Endothelial cell of umbilical vein (primary cell): ENCODE measurements at regions of chr11 and their contacts with region 1.

Region 1: DNA sequence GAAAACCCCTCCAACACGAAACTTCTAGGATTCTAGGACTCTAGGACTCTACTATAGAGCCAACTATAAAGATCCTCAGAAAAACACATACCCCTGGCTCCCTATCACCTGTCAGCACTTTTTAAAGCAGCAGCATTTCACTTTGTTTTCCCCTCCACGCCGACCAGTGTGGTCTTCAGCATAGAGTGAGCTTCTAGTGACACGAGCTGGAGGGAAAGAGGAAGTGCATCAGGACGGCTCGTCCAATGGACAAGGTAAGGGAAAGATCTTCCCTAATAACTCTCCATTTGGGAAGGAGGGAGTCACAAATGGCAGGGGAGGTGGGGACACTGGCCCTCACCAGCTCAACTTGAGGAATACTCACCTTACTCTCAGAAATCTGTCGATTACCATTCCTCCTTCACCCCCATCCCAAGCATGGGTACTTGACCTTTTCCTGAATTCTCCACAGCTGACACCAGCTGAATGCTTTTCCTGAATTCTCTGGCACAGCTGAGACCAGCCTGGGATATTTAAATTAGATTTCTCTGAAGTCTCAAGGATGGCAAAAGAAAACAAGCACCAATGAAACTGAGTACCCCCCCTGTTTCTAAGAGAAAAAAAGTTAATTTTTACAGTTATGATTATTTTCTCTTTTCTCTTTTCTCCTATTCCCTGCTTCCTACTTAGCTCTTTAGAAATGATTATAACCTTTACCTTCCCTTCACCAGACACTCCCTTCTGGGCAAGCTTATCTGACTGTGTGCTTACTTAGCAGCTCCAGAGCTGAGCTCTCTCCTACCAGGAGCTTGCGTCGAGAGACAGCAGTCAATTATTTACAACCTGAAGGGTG is 33.3 kb upstream of the NNMT start:
- DNase-seq: peak; percentile 55
- H3K4me3 ChIP-seq: no peak overlapping the region
- H3K27ac ChIP-seq: no peak overlapping the region
- H3K4me1 ChIP-seq: no peaks in the 10 kb centered on the region
- H3K27me3 ChIP-seq: peaks cover 9 to 14% of the 10 kb centered on the region in 2 experiments
- CTCF ChIP-seq: peak; percentile 72 to 73
- POLR2A ChIP-seq: no peak

Region 2: DNA sequence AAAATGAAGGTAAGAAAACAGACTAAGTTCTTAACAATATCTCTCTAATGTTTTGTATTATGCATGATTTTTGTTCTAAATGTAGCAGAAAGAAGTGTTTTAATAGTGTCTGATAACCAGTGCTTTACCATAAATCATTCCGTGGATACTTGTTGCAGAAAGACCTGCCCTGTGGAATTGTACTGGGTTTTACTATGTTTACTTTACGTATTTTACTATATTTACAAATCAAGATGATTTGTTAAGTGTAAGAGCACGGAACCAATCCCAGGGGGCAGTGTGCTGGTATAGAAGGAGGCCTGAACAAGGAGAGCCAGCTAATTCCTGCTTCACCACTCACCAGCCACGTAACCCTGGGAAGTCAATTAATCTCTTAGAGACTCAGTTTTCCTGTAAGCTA is 356.9 kb before region 1 on chr11:
- CTCF ChIA-PET with region 1: interaction called, 55 read pairs
- POLR2A ChIA-PET with region 1: no interaction called
- dilution Hi-C with region 1: no loop called
- intact Hi-C with region 1: no loop called
- DNase-seq: no peak
- H3K4me3 ChIP-seq: no peak overlapping the region
- H3K27ac ChIP-seq: no peak overlapping the region
- H3K4me1 ChIP-seq: no peaks in the 10 kb centered on the region
- H3K27me3 ChIP-seq: peaks cover 18 to 34% of the 10 kb centered on the region in 2 experiments
- CTCF ChIP-seq: peak in 1 of 2 donors; percentile 16
- POLR2A ChIP-seq: no peak

Region 3: GRCh38 chr11:114017723-114018122 is 245.2 kb before region 1 on chr11:
- CTCF ChIA-PET with region 1: interaction called, 244 read pairs
- POLR2A ChIA-PET with region 1: no interaction called
- dilution Hi-C with region 1: no loop called
- intact Hi-C with region 1: no loop called
- DNase-seq: no peak
- H3K4me3 ChIP-seq: no peak overlapping the region
- H3K27ac ChIP-seq: no peak overlapping the region
- H3K4me1 ChIP-seq: no peaks in the 10 kb centered on the region
- H3K27me3 ChIP-seq: no peaks in the 10 kb centered on the region
- CTCF ChIP-seq: no peak
- POLR2A ChIP-seq: no peak

Region 4: GRCh38 chr11:114053406-114053805 is 209.5 kb before region 1 on chr11:
- CTCF ChIA-PET with region 1: interaction called, 90 read pairs
- POLR2A ChIA-PET with region 1: no interaction called
- dilution Hi-C with region 1: loop called (anchors 25 kb)
- intact Hi-C with region 1: no loop called
- DNase-seq: no peak
- H3K4me3 ChIP-seq: no peak overlapping the region
- H3K27ac ChIP-seq: no peak overlapping the region
- H3K4me1 ChIP-seq: peaks cover 3% of the 10 kb centered on the region
- H3K27me3 ChIP-seq: peaks cover 0 to 2% of the 10 kb centered on the region in 2 experiments
- CTCF ChIP-seq: no peak
- POLR2A ChIP-seq: no peak

Region 5: DNA sequence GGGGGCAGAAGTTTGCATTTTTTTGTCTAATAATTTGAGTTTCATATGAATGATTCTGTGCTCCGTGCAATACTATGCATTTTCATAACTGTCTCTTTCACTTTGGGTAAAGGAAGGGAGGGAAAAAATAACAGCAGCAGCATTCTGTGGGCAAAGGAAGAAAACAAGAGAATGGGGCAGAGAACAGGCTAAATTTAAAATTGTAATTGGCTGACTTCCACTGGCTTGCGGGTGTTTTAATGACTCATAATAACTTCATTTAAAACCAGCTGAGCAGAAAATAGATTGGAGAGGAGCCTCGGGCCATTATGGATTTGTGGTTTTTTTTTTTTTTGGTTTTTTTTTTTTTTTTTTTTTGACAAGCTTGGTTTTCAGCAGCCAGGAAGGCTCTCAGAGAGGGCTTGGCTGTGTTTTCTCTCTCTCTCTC is 96.0 kb before region 1 on chr11:
- CTCF ChIA-PET with region 1: interaction called, 13 read pairs
- POLR2A ChIA-PET with region 1: no interaction called
- dilution Hi-C with region 1: no loop called
- intact Hi-C with region 1: no loop called
- DNase-seq: peak; percentile 89
- H3K4me3 ChIP-seq: peak overlapping the region in 1 of 3 experiments; percentile 28
- H3K27ac ChIP-seq: peak overlapping the region; percentile 58
- H3K4me1 ChIP-seq: peaks cover 71% of the 10 kb centered on the region
- H3K27me3 ChIP-seq: no peaks in the 10 kb centered on the region
- CTCF ChIP-seq: no peak
- POLR2A ChIP-seq: no peak

Region 6: DNA sequence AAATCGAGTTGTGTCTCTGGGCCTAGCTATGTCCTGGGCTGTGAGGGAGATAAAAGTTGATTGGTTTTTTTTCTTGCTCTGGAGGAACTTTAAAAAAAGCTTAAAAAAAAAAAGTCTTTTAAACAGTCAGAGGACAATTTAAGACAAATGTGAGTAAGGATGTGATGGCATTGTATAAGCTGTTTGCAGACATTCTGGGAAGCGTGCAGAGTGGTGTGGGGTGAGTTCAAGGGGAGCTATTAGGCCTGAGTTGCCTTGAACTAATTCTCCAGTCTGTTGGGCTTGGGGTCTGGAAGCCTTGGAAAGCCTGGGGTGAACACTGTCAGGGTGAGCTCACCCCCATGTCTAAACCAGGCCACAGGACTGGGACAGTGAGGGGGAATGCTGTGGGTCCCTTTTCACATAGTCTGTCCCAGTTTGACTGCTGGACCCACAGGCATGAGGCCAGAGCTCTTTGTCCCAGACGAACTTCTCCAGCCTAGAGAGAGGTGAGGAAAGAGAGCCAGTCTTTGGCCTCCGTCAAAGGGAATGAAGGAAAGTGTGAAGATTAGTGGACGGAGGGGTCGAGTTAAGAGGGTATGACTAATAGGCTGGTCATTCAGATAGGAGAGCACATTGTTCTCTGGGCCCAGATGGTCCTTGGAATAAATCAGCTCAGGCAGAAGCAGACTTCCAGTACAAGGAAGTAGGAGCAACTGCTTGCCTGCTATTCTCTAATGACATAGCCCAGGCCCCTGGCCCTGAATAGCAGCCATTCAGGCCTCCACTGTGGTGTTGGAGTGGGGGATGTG is 43.1 kb before region 1 on chr11:
- CTCF ChIA-PET with region 1: interaction called, 23 read pairs
- POLR2A ChIA-PET with region 1: no interaction called
- dilution Hi-C with region 1: no loop called
- intact Hi-C with region 1: no loop called
- DNase-seq: peak; percentile 95
- H3K4me3 ChIP-seq: no peak overlapping the region
- H3K27ac ChIP-seq: peak overlapping the region; percentile 83
- H3K4me1 ChIP-seq: peaks cover 17% of the 10 kb centered on the region
- H3K27me3 ChIP-seq: no peaks in the 10 kb centered on the region
- CTCF ChIP-seq: no peak
- POLR2A ChIP-seq: peak; percentile 42